Activated B cell treated with CpG ODN at 0.5 μM for 24 hours (primary cell): ENCODE measurements at regions of chr9 and their contacts with region 1.

Region 1: GRCh38 chr9:37251452-37251851 is 131.1 kb downstream of the ZCCHC7 start:
- DNase-seq: peak; percentile 31
- ATAC-seq: peak; percentile 93
- H3K4me3 Mint-ChIP-seq: peak overlapping the region; percentile 45
- H3K27ac Mint-ChIP-seq: peak overlapping the region; percentile 94
- H3K4me1 Mint-ChIP-seq: peaks cover 68% of the 10 kb centered on the region
- H3K27me3 Mint-ChIP-seq: no peaks in the 10 kb centered on the region
- CTCF ChIP-seq: no peak

Region 2: DNA sequence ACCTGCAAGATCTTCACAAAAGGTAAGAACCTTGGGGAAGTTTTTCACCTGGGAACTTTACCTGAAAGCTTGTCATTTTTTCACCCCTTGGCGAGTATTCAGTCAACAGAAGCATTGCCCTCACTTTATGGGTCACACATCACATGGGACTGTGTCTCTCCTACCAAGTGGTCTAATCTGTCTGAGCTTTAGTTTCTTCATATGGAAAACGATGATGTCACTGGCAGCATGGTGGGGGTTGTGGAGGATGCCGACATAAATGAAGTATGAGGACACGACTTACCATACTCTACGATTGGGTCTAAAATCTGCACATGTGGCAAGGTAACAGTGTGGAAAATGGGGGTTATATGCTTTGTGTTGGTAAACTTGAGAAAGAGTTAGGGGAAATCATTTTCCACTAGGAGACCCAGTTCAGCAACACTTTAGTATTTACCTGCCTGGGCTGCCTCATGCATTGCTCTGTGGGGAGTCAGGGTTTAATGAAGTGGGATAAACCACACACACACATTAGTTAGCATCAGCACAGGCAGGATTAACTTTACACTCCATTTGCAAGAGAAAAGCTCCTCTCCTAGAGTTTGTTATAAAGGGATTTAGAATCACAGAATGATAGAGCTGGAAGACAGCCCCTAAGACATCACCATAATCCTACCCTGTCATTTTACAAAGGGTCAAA is 197.6 kb before region 1 on chr9:
- CTCF ChIA-PET with region 1: no interaction called
- POLR2A ChIA-PET with region 1: no interaction called
- intact Hi-C with region 1: no loop called
- DNase-seq: no peak
- ATAC-seq: no peak
- H3K4me3 Mint-ChIP-seq: no peak overlapping the region
- H3K27ac Mint-ChIP-seq: no peak overlapping the region
- H3K4me1 Mint-ChIP-seq: peaks cover 19% of the 10 kb centered on the region
- H3K27me3 Mint-ChIP-seq: no peaks in the 10 kb centered on the region
- CTCF ChIP-seq: no peak

Region 3: GRCh38 chr9:37239224-37239859 is 12.1 kb before region 1 on chr9:
- CTCF ChIA-PET with region 1: no interaction called
- POLR2A ChIA-PET with region 1: interaction called, 12 read pairs
- intact Hi-C with region 1: loop called (anchors 1 kb)
- DNase-seq: no peak
- ATAC-seq: no peak
- H3K4me3 Mint-ChIP-seq: no peak overlapping the region
- H3K27ac Mint-ChIP-seq: no peak overlapping the region
- H3K4me1 Mint-ChIP-seq: peaks cover 65% of the 10 kb centered on the region
- H3K27me3 Mint-ChIP-seq: no peaks in the 10 kb centered on the region
- CTCF ChIP-seq: no peak

Region 4: GRCh38 chr9:37283730-37284325 is 32.4 kb after region 1 on chr9:
- CTCF ChIA-PET with region 1: no interaction called
- POLR2A ChIA-PET with region 1: no interaction called
- intact Hi-C with region 1: loop called (anchors 2 kb)
- DNase-seq: no peak
- ATAC-seq: peak; percentile 62
- H3K4me3 Mint-ChIP-seq: peak overlapping the region; percentile 60
- H3K27ac Mint-ChIP-seq: peak overlapping the region; percentile 88
- H3K4me1 Mint-ChIP-seq: peaks cover 68% of the 10 kb centered on the region
- H3K27me3 Mint-ChIP-seq: no peaks in the 10 kb centered on the region
- CTCF ChIP-seq: no peak